Stomach (tissue), 19 donors: ENCODE measurements at regions of chr22 and their contacts with region 1.

Region 1: DNA sequence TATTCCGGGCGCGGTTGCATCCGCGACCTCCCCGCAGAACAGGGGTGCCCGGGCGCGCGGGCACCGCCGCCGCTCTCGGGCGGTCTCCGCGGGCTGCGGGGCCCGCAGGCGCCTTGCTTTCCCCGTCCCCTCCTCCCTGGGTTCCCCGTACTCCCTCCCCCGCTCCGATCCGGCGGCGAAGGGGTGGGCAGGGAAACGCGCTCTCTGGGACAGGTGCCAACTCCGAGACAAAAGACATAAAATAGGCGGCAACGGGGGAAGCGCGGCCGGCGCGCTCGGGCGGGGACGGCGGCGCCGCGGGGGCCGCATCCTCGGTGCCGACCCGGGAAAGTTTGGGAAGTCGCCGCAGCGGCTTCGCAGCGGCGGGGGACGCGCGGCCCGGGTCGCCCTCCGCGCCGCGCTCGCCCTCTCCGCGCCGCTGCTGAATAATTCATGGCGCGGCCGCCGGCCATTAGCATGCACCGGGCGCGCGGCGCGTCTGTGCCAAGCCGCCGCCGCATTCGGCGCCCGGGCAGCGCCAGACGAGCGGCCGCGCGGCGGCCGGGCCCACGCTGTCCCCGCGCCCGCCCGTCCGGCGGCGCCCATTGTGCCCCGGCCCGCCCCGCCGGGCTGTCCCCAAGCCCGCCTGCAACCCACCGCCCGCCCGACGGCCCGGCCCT is 78.7 kb upstream of the PPARA start:
- DNase-seq: peak; percentile 91 to 96
- H3K4me3 ChIP-seq: peak overlapping the region; percentile 59 to 91 (median 80)
- H3K27ac ChIP-seq: peak overlapping the region; percentile 97 to 100 (median 99)
- H3K4me1 ChIP-seq: peaks cover 28 to 70% (median 47%) of the 10 kb centered on the region in 4 donors
- H3K27me3 ChIP-seq: no peaks in the 10 kb centered on the region
- CTCF ChIP-seq: no peak
- EP300 ChIP-seq: no peak
- POLR2A ChIP-seq: no peak

Region 2: DNA sequence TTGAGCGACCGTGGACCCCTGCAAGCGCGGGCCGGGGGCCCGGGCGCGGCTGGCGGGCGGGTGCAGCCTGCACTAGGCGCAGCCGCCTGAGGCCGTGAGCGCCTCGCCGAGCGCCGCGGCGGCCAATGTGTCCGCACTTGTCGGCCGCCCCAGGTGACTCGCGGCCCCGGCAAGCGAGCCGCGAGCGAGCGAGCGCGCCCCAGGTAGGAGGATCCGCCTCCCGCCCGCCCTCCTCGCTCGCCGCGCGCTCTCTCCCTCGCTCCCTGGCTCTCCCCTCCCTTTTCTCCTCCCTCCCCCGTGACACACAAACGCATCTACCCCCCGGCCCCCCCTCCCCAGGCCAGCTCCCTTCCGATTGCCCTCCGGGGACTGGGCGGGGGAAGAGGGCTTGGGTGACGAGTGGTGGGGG is 94.6 kb before region 1 on chr22 and contains the start of gene WNT7B:
- intact Hi-C with region 1: no loop called
- DNase-seq: peak in 1 of 2 donors; percentile 73
- H3K4me3 ChIP-seq: peak within 1 kb of the TSS; percentile 25 to 51 (median 40)
- H3K27ac ChIP-seq: no peak within 1 kb of the TSS
- H3K4me1 ChIP-seq: peaks cover 41 to 56% (median 45%) of the 10 kb centered on the region in 4 donors
- H3K27me3 ChIP-seq: peaks cover 28 to 72% (median 65%) of the 10 kb centered on the region in 3 donors
- CTCF ChIP-seq: no peak
- EP300 ChIP-seq: no peak
- POLR2A ChIP-seq: no peak
- total RNA-seq, gene WNT7B: not detected

Region 3: DNA sequence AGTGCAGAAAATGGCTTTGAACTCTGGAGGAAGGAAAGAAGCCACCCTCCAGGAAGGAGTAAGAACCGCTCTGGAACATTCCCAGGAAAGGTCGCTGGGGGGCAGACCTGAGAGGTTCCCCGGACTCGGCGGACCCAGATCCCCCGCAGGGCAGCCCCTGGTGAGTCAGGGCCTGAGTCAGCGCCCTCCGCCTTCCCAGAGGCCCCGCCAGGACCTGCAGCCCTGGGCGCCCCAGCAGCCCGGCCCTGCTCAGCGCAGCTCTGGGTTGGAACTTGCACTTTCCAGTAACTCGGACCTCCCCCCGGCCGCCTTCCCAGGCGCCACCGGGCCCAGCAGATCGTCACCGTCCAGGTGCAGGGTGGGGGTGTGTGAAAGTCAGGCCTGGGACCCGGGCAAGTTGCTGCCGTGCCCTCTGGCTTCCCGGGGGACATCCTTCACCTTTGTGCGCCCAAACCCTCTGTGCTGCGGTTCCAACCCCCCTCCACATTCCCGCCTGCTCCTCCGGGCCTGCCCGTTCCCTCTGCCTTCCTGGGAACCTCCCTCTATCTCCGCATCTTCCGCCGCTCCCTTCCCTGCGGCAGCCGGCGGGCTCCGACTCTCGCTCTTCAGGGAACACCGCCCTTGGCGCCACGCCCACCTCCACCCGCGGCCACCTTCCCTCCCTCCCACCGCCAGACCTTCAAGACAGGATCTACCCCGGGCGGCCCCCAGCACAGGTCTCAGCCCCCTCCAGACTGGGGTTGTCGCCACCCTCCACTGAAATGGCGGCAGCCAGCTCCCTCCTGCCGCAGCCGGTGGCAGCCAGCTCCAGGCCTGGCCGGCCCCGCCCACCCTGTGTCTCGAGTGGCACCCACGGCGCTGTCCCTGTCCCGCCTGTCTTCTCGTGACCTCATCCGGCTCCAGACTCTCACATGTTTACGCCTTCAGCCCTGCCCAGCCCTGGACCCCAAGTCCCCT is 57.8 kb before region 1 on chr22:
- intact Hi-C with region 1: loop called (anchors 10 kb)
- DNase-seq: peak; percentile 92 to 97
- H3K4me3 ChIP-seq: peak overlapping the region; percentile 60 to 64 (median 61)
- H3K27ac ChIP-seq: peak overlapping the region; percentile 97 to 99 (median 98)
- H3K4me1 ChIP-seq: peaks cover 15 to 43% (median 40%) of the 10 kb centered on the region in 4 donors
- H3K27me3 ChIP-seq: no peaks in the 10 kb centered on the region
- CTCF ChIP-seq: peak in 5 of 7 experiments; percentile 35 to 60 (median 47)
- EP300 ChIP-seq: no peak
- POLR2A ChIP-seq: peak in 1 of 4 donors; percentile 21

Region 4: GRCh38 chr22:46171940-46172339 is 100.4 kb after region 1 on chr22:
- intact Hi-C with region 1: no loop called
- DNase-seq: no peak
- H3K4me3 ChIP-seq: no peak overlapping the region
- H3K27ac ChIP-seq: no peak overlapping the region
- H3K4me1 ChIP-seq: peaks cover 10 to 28% (median 20%) of the 10 kb centered on the region in 4 donors
- H3K27me3 ChIP-seq: no peaks in the 10 kb centered on the region
- CTCF ChIP-seq: no peak
- EP300 ChIP-seq: no peak
- POLR2A ChIP-seq: no peak